Breast epithelium (tissue), 4 donors: ENCODE measurements at regions of chr20 and their contacts with region 1.

Region 1: GRCh38 chr20:47365023-47365764 is 8.7 kb upstream of the ZMYND8 start:
- DNase-seq: no peak
- H3K4me3 ChIP-seq: no peak overlapping the region
- H3K27ac ChIP-seq: no peak overlapping the region
- H3K4me1 ChIP-seq: peaks cover 7 to 11% of the 10 kb centered on the region in 2 donors
- H3K27me3 ChIP-seq: no peaks in the 10 kb centered on the region
- CTCF ChIP-seq: no peak
- POLR2A ChIP-seq: no peak

Region 2: DNA sequence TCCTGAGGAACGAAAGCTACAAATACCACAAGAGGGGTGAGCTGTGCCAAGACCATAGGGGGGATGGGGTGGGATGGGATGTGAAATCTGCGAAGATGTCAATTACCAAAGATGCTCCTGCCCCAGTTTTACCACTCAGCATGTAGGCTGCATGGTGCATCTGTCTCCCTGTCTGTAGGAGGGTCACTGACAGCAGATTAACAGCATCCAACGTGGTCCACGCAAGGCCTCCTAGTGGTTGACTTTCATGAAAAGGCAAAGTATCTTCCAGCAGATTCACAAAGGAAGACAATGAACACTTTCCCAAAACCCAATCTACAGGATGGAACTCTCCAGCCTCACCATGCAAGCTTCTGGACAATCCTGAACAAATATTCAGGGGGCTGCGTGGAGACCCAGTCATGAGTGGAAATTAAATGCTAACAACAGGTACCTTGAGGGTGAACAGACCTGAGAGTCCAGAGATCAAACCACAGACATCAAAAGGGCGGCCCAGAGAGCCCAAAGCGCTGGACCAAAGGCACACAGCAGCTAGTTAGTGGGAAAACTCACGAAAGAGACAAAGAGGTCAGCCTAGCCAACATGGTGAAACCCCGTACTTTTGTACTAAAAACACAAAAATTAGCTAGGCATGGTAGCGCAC is 53.1 kb before region 1 on chr20:
- intact Hi-C with region 1: loop called (anchors 5 kb)
- DNase-seq: no peak
- H3K4me3 ChIP-seq: no peak overlapping the region
- H3K27ac ChIP-seq: peak overlapping the region; percentile 59 to 99
- H3K4me1 ChIP-seq: peaks cover 6 to 19% of the 10 kb centered on the region in 2 donors
- H3K27me3 ChIP-seq: no peaks in the 10 kb centered on the region
- CTCF ChIP-seq: peak in 1 of 3 donors; percentile 14
- POLR2A ChIP-seq: no peak

Region 3: DNA sequence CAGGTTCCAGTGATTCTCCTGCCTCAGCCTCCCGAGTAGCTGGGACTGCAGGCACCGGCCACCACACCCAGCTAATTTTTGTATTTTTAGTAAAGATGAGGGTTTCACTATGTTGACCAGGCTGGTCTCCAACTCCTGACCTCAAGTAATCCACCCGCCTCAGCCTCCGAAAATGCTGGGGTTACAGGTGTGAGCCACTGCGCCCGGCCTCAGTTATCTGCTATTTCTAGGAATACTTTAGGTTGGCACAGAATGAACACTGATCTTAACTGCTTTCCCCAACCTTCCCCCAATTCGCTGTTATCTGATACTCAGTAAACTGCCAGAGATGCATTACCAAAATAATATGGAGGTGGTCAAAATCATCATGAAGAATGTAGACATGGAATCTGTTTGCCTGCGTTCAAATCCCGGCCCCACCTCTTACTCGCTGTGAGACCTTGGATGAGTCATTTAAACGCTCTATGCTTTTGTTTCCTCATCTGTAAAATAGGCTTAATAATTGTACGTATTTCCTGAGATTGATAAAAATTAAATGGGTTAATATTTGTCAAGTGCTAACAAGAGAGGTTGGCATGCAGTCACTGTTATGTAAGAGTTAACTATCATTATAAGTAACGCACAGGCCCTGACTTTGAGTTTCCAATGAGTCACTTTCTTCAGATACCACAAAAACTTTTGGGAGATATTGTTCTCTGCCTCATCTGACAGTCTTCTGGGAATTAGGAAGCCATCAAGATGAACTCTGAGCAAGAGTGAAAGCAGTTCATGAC is 91.9 kb after region 1 on chr20:
- intact Hi-C with region 1: no loop called
- DNase-seq: no peak
- H3K4me3 ChIP-seq: no peak overlapping the region
- H3K27ac ChIP-seq: no peak overlapping the region
- H3K4me1 ChIP-seq: no peaks in the 10 kb centered on the region
- H3K27me3 ChIP-seq: no peaks in the 10 kb centered on the region
- CTCF ChIP-seq: no peak
- POLR2A ChIP-seq: no peak

Region 4: DNA sequence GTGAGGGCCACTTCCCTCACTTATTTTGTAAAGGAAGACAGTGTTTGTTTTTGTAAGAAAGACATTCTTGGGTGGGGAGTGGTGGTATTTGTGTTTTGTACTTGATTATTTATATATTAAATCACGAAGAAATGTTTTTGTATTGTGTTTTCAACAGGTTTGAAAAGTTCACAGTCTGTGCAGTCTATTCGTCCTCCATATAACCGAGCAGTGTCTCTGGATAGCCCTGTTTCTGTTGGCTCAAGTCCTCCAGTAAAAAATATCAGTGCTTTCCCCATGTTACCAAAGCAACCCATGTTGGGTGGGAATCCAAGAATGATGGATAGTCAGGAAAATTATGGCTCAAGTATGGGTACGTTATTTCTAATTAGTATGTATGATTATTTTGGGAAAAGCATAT is 273.7 kb after region 1 on chr20:
- intact Hi-C with region 1: no loop called
- DNase-seq: no peak
- H3K4me3 ChIP-seq: no peak overlapping the region
- H3K27ac ChIP-seq: no peak overlapping the region
- H3K4me1 ChIP-seq: no peaks in the 10 kb centered on the region
- H3K27me3 ChIP-seq: no peaks in the 10 kb centered on the region
- CTCF ChIP-seq: no peak
- POLR2A ChIP-seq: no peak